Prostate gland (tissue), 2 donors: ENCODE measurements at regions of chr14 and their contacts with region 1.

Region 1: DNA sequence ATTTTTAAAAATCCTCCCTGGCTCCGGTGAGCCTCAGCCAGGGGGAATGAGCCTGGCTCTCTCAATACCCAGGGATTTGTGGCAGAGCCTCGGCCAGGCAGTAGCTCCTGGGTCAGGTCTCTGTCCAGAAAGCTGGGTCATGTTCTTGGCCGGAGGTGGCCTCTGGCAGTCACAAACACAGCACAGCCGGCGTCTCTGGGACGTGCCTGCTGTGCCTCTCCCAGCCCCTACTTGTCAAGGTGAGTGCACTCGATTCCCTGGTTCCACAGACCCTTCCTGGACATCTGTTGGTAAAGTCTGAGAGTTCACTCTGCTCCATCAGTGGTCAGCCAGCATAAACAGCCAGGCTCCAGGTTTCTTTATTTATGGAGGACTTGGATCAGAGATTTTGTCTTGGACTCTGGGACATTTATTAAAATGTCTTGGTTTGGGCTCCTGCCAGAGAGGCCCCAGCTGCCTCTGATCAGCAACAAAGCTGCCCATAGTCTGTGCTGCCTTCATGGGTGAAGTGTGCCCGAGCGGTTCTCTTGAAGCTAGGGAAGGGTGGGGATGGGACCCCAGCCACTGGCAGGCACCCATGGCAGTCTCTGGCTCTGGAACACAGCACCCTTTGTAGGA is 56.7 kb downstream of the DGLUCY start:
- DNase-seq: no peak
- H3K4me3 ChIP-seq: no peak overlapping the region
- H3K27ac ChIP-seq: peak overlapping the region; percentile 41 to 42
- H3K4me1 ChIP-seq: peaks cover 10% of the 10 kb centered on the region
- H3K27me3 ChIP-seq: no peaks in the 10 kb centered on the region
- CTCF ChIP-seq: no peak
- POLR2A ChIP-seq: no peak

Region 2: DNA sequence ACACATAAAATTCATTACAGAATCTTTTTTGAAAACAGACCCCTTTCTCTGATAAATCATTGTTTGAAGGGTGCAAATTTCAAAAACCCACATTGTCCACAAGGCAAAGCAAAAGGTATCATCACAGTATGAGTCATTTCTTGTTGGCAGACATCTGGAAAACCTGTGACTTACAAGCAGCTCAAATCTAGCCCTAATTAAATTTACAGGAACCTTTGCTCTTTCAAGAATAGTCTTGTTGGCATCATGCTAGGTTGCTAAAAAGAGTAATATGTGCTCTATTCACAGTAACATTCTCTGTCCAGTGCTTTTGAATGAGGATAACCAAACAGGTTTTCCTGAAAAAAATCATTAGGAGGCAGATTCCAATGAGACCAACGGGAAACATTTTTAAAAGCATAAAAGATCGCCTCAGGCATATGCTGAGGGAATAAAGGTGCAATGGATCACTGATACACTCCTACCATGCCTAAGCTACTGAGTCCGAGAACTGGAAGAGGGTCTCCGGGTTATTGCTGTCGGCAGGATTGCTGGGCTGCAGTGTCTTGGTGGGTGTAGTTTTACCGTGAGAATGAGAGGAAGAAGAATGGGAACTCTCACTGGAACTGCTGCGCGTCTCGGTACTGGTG is 298.9 kb before region 1 on chr14:
- intact Hi-C with region 1: no loop called
- DNase-seq: peak; percentile 21
- H3K4me3 ChIP-seq: no peak overlapping the region
- H3K27ac ChIP-seq: no peak overlapping the region
- H3K4me1 ChIP-seq: no peaks in the 10 kb centered on the region
- H3K27me3 ChIP-seq: no peaks in the 10 kb centered on the region
- CTCF ChIP-seq: no peak
- POLR2A ChIP-seq: no peak

Region 3: GRCh38 chr14:91114079-91115065 is 56.2 kb before region 1 on chr14:
- intact Hi-C with region 1: loop called (anchors 2 kb)
- DNase-seq: peak; percentile 72
- H3K4me3 ChIP-seq: peak overlapping the region; percentile 41 to 46
- H3K27ac ChIP-seq: peak overlapping the region; percentile 92
- H3K4me1 ChIP-seq: no peaks in the 10 kb centered on the region
- H3K27me3 ChIP-seq: no peaks in the 10 kb centered on the region
- CTCF ChIP-seq: no peak
- POLR2A ChIP-seq: peak; percentile 32

Region 4: GRCh38 chr14:91349481-91350074 is 179.0 kb after region 1 on chr14:
- intact Hi-C with region 1: no loop called
- DNase-seq: no peak
- H3K4me3 ChIP-seq: no peak overlapping the region
- H3K27ac ChIP-seq: no peak overlapping the region
- H3K4me1 ChIP-seq: peaks cover 2% of the 10 kb centered on the region
- H3K27me3 ChIP-seq: no peaks in the 10 kb centered on the region
- CTCF ChIP-seq: no peak
- POLR2A ChIP-seq: no peak